Activated CD4-positive, alpha-beta memory T cell treated with anti-CD3 and anti-CD28 coated beads, Interleukin-2, amount 10 ng/mL, durations not matched to agents 7 days and 5 days (primary cell): ENCODE measurements at regions of chr12 and their contacts with region 1.

Region 1: GRCh38 chr12:10613349-10614055 is at the start of gene MAGOHB:
- DNase-seq: peak; percentile 99
- H3K4me3 Mint-ChIP-seq: peak within 1 kb of the TSS; percentile 97
- H3K27ac Mint-ChIP-seq: peak within 1 kb of the TSS; percentile 96
- H3K4me1 Mint-ChIP-seq: peaks cover 35% of the 10 kb centered on the region
- H3K27me3 Mint-ChIP-seq: peaks cover 18% of the 10 kb centered on the region
- total RNA-seq, gene MAGOHB: 38.4 to 39.0 TPM

Region 2: GRCh38 chr12:10397311-10397710 is 216.2 kb before region 1 on chr12:
- CTCF ChIA-PET with region 1: no interaction called
- POLR2A ChIA-PET with region 1: no interaction called
- DNase-seq: no peak
- H3K4me3 Mint-ChIP-seq: no peak overlapping the region
- H3K27ac Mint-ChIP-seq: no peak overlapping the region
- H3K4me1 Mint-ChIP-seq: no peaks in the 10 kb centered on the region
- H3K27me3 Mint-ChIP-seq: peaks cover 18% of the 10 kb centered on the region

Region 3: DNA sequence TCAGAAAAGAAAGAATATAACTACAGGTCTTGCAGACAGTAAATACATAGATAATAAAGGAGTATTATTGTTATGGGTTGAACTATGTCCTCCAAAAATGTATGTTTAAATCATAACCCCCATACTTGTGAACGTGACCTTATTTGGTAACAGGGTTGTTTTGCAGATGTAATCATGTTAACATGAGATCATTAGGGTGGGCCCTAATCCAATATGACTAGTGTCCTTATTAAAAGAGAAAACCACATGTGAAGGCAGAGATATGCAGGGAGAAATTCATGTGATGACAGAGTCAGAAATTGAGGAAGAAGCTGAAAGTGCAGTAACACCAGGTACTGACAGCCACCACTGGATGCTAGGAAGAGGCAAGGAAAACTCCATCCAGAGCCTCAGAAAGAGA is 29.1 kb before region 1 on chr12:
- CTCF ChIA-PET with region 1: no interaction called
- POLR2A ChIA-PET with region 1: no interaction called
- DNase-seq: no peak
- H3K4me3 Mint-ChIP-seq: no peak overlapping the region
- H3K27ac Mint-ChIP-seq: no peak overlapping the region
- H3K4me1 Mint-ChIP-seq: peaks cover 1% of the 10 kb centered on the region
- H3K27me3 Mint-ChIP-seq: no peaks in the 10 kb centered on the region

Region 4: GRCh38 chr12:10600988-10601387 is 12.5 kb before region 1 on chr12:
- CTCF ChIA-PET with region 1: no interaction called
- POLR2A ChIA-PET with region 1: interaction called, 20 read pairs
- DNase-seq: no peak
- H3K4me3 Mint-ChIP-seq: no peak overlapping the region
- H3K27ac Mint-ChIP-seq: no peak overlapping the region
- H3K4me1 Mint-ChIP-seq: peaks cover 11% of the 10 kb centered on the region
- H3K27me3 Mint-ChIP-seq: no peaks in the 10 kb centered on the region

Region 5: GRCh38 chr12:10721651-10722501 is 108.4 kb after region 1 on chr12:
- CTCF ChIA-PET with region 1: interaction called, 3 read pairs
- POLR2A ChIA-PET with region 1: interaction called, 10 read pairs
- DNase-seq: peak; percentile 46
- H3K4me3 Mint-ChIP-seq: peak overlapping the region; percentile 86
- H3K27ac Mint-ChIP-seq: peak overlapping the region; percentile 69
- H3K4me1 Mint-ChIP-seq: peaks cover 29% of the 10 kb centered on the region
- H3K27me3 Mint-ChIP-seq: peaks cover 44% of the 10 kb centered on the region

Region 6: DNA sequence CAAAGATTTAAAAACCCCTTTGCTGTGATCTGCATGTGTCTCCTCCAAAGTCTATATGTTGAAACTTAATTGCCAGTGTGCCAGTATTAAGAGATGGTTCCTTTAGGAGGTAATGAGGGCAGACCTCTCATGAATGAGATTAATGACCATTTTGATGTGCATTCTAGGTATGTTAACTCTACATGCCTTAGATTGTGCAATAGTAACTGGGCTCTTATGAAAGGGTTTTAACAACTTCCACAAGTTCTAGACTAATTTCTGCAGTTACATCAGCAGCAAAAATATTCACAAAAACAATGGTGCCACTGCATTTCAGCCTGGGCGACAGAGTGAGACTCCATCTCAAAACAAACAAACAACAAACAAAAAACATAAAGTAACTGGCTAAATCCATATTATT is 216.5 kb after region 1 on chr12:
- CTCF ChIA-PET with region 1: no interaction called
- POLR2A ChIA-PET with region 1: no interaction called
- DNase-seq: no peak
- H3K4me3 Mint-ChIP-seq: no peak overlapping the region
- H3K27ac Mint-ChIP-seq: no peak overlapping the region
- H3K4me1 Mint-ChIP-seq: no peaks in the 10 kb centered on the region
- H3K27me3 Mint-ChIP-seq: no peaks in the 10 kb centered on the region